CD8-positive, alpha-beta T cell (primary cell): ENCODE measurements at regions of chr9 and their contacts with region 1.

Region 1: GRCh38 chr9:137295238-137295811 is 6.7 kb downstream of the NRARP start:
- DNase-seq: peak in 7 of 9 experiments; percentile 22 to 71 (median 53)
- ATAC-seq: peak; percentile 91
- H3K4me3 ChIP-seq: peak overlapping the region in 1 of 2 experiments; percentile 48
- H3K4me3 Mint-ChIP-seq: peak overlapping the region; percentile 26
- H3K27ac ChIP-seq: no peak overlapping the region
- H3K27ac Mint-ChIP-seq: no peak overlapping the region
- H3K4me1 ChIP-seq: peaks cover 12% of the 10 kb centered on the region
- H3K4me1 Mint-ChIP-seq: peaks cover 8% of the 10 kb centered on the region
- H3K27me3 ChIP-seq: peaks cover 35% of the 10 kb centered on the region in 2 experiments
- H3K27me3 Mint-ChIP-seq: peaks cover 35% of the 10 kb centered on the region
- CTCF ChIP-seq: peak; percentile 63

Region 2: DNA sequence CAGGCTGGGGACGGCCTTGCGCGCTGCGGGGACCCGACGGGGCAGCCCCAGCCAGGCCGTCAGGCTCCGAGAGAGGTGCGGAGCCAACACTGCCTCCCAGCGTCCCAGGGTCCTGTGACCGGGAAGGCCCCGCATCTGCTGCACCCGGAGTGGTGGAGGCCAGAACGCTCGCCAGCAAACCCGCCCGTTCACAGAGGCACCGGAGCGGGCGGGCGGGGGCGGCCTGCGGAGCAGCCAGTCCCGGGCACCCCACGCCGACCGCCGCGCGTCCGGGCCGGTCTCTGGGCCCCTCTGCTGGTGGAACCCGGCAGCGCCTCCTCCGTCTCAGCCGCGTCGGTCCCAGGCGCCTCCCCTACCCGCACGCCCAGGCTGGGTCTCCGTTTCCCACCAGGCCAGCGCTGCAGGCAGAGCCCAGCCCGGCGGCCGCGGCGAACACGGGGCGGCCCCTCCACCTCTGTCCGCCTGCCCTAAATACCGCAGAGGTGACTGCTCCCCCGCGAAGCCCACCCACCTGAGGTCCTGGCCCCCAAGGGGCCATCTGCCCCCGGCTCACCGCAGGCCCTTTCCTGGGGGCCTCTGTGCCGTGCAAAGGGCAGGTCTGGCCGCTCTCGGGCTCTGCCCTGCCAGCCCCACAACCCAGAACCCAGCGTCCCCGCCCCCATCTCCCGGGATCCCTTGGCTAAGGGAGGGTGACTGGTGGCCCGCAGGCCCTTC is 111.7 kb after region 1 on chr9:
- CTCF ChIA-PET with region 1: interaction called, 3 read pairs
- POLR2A ChIA-PET with region 1: interaction called, 3 read pairs
- intact Hi-C with region 1: loop called (anchors 1 to 2 kb)
- DNase-seq: peak; percentile 40 to 84 (median 60)
- ATAC-seq: peak; percentile 98
- H3K4me3 ChIP-seq: no peak overlapping the region
- H3K4me3 Mint-ChIP-seq: no peak overlapping the region
- H3K27ac ChIP-seq: no peak overlapping the region
- H3K27ac Mint-ChIP-seq: no peak overlapping the region
- H3K4me1 ChIP-seq: peaks cover 25% of the 10 kb centered on the region
- H3K4me1 Mint-ChIP-seq: peaks cover 4% of the 10 kb centered on the region
- H3K27me3 ChIP-seq: peaks cover 0 to 3% of the 10 kb centered on the region in 2 experiments
- H3K27me3 Mint-ChIP-seq: no peaks in the 10 kb centered on the region
- CTCF ChIP-seq: peak; percentile 66

Region 3: GRCh38 chr9:137521405-137521985 is 226.2 kb after region 1 on chr9:
- CTCF ChIA-PET with region 1: no interaction called
- POLR2A ChIA-PET with region 1: no interaction called
- intact Hi-C with region 1: loop called (anchors 5 to 10 kb)
- DNase-seq: no peak
- ATAC-seq: no peak
- H3K4me3 ChIP-seq: no peak overlapping the region
- H3K4me3 Mint-ChIP-seq: no peak overlapping the region
- H3K27ac ChIP-seq: no peak overlapping the region
- H3K27ac Mint-ChIP-seq: no peak overlapping the region
- H3K4me1 ChIP-seq: no peaks in the 10 kb centered on the region
- H3K4me1 Mint-ChIP-seq: no peaks in the 10 kb centered on the region
- H3K27me3 ChIP-seq: no peaks in the 10 kb centered on the region
- H3K27me3 Mint-ChIP-seq: no peaks in the 10 kb centered on the region
- CTCF ChIP-seq: no peak